Activated B cell treated with CpG ODN at 0.5 μM for 24 hours (primary cell): ENCODE measurements at regions of chr4 and their contacts with region 1.

Region 1: DNA sequence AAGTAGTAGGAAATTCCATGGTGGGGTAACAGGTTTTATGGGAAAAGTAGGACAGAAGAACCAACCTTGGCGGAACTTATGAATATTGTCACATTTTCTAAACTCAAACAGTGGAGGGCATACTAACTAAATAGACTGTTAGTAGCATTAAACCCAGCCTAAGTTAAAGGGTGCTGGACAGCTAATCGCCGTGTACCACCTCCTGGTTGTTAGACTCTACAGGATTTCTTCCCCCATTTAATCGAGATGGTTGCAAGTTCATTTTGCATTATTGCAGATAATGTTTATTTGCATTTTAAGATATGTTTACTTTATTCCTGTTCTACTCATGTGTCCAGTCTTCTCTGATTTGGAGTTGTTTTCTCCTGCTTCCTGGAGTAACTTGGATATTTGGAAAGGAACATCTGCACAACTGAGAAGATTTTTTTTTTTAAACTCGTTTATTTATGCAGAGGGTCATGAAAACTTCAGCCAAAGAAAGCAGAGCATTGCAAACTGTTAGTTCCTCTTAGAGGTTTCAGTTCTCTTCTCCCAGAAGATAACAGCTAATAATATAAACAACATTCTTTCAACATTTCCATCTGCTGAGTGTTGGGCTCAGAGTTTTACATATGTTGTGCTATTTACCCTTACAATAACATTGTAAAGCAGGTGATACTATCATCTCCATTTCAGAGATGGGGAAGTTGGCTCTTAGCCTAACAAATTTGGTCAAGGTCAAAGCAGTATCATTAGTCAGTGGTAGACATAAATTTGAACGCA is 51.5 kb upstream of the TBC1D9 start:
- DNase-seq: no peak
- ATAC-seq: peak; percentile 78
- H3K4me3 Mint-ChIP-seq: peak overlapping the region; percentile 72
- H3K27ac Mint-ChIP-seq: peak overlapping the region; percentile 93
- H3K4me1 Mint-ChIP-seq: peaks cover 89% of the 10 kb centered on the region
- H3K27me3 Mint-ChIP-seq: no peaks in the 10 kb centered on the region
- CTCF ChIP-seq: no peak

Region 2: GRCh38 chr4:140829825-140830224 is 22.2 kb after region 1 on chr4:
- CTCF ChIA-PET with region 1: no interaction called
- POLR2A ChIA-PET with region 1: interaction called, 5 read pairs
- intact Hi-C with region 1: loop called (anchors 2 kb)
- DNase-seq: no peak
- ATAC-seq: peak; percentile 95
- H3K4me3 Mint-ChIP-seq: peak overlapping the region; percentile 33
- H3K27ac Mint-ChIP-seq: peak overlapping the region; percentile 91
- H3K4me1 Mint-ChIP-seq: peaks cover 73% of the 10 kb centered on the region
- H3K27me3 Mint-ChIP-seq: no peaks in the 10 kb centered on the region
- CTCF ChIP-seq: no peak

Region 3: GRCh38 chr4:140947507-140947906 is 139.8 kb after region 1 on chr4:
- CTCF ChIA-PET with region 1: no interaction called
- POLR2A ChIA-PET with region 1: no interaction called
- intact Hi-C with region 1: no loop called
- DNase-seq: no peak
- ATAC-seq: no peak
- H3K4me3 Mint-ChIP-seq: no peak overlapping the region
- H3K27ac Mint-ChIP-seq: no peak overlapping the region
- H3K4me1 Mint-ChIP-seq: no peaks in the 10 kb centered on the region
- H3K27me3 Mint-ChIP-seq: peaks cover 12% of the 10 kb centered on the region
- CTCF ChIP-seq: no peak